ENCODE measurements at regions of chr7 and their contacts with region 1.

Region 1: GRCh38 chr7:107890962-107891635 is at the start of gene DLD:
- DNase-seq: peak; percentile 95
- H3K4me3 Mint-ChIP-seq: peak within 1 kb of the TSS; percentile 93
- H3K27ac Mint-ChIP-seq: peak within 1 kb of the TSS; percentile 91
- H3K4me1 Mint-ChIP-seq: peaks cover 47% of the 10 kb centered on the region
- H3K27me3 Mint-ChIP-seq: no peaks in the 10 kb centered on the region
- total RNA-seq, gene DLD: 68.2 to 70.6 TPM

Region 2: GRCh38 chr7:107879400-107880035 is 11.6 kb before region 1 on chr7:
- CTCF ChIA-PET with region 1: interaction called, 29 read pairs
- POLR2A ChIA-PET with region 1: interaction called, 20 read pairs
- DNase-seq: peak; percentile 40
- H3K4me3 Mint-ChIP-seq: no peak overlapping the region
- H3K27ac Mint-ChIP-seq: no peak overlapping the region
- H3K4me1 Mint-ChIP-seq: peaks cover 31% of the 10 kb centered on the region
- H3K27me3 Mint-ChIP-seq: peaks cover 8% of the 10 kb centered on the region

Region 3: DNA sequence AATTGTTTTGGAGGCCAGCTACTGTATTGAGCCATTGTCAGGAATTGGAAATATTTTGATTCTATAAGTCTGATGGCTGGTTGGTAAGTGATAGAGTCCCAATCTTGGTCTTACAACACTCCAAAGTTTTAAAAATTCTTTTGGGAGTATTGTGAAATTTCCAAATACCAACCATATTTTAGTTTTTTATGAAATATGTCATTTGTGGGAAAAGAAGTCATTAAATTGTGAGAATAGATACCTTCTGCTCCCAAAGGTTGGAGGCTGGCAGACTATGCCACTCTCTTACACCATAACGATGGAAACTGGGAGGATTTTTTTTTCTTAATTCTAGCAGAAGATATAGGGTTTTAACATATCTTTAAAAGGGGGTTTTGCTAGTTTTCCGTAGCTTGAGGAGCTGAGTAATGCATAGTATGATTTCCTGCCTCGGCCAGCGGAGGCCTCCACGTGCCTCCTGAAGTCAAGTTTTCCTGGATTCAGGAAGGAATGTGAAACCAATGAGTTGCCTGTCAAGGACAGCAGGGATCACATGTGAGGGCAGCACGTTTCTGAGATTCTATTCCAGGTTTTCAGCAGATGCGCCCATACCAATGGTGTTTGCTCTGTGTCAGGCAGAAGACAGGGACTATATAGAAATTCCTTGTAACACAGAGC is 331.3 kb after region 1 on chr7:
- CTCF ChIA-PET with region 1: no interaction called
- POLR2A ChIA-PET with region 1: no interaction called
- DNase-seq: no peak
- H3K4me3 Mint-ChIP-seq: no peak overlapping the region
- H3K27ac Mint-ChIP-seq: no peak overlapping the region
- H3K4me1 Mint-ChIP-seq: no peaks in the 10 kb centered on the region
- H3K27me3 Mint-ChIP-seq: peaks cover 3% of the 10 kb centered on the region